ENCODE measurements at regions of chr7 and their contacts with region 1.

Region 1: DNA sequence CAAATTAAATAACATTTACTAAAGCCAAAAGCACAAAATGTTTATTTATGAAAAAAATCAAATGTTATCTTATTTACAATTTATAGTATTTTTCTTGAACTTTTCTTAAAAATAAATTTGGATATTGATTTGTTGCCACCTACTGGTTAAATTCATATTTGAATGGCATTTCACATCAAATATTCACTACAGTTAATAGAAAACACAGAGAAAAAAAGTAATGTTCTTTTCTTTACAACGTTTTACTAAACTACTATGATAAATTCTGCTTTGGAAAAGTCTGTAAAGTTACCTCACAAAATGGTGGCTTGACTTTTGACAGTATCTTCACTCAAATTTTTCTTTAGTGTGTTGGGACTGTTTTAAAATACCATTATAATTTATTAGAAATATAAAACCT is 52.7 kb downstream of the SRPK2 start:
- DNase-seq: peak in 1 of 9 experiments; percentile 34
- ATAC-seq: no peak
- H3K4me3 ChIP-seq: no peak overlapping the region
- H3K4me3 Mint-ChIP-seq: no peak overlapping the region
- H3K27ac ChIP-seq: no peak overlapping the region
- H3K27ac Mint-ChIP-seq: no peak overlapping the region
- H3K4me1 ChIP-seq: no peaks in the 10 kb centered on the region
- H3K4me1 Mint-ChIP-seq: peaks cover 26% of the 10 kb centered on the region
- H3K27me3 ChIP-seq: no peaks in the 10 kb centered on the region
- H3K27me3 Mint-ChIP-seq: no peaks in the 10 kb centered on the region
- CTCF ChIP-seq: peak; percentile 84

Region 2: DNA sequence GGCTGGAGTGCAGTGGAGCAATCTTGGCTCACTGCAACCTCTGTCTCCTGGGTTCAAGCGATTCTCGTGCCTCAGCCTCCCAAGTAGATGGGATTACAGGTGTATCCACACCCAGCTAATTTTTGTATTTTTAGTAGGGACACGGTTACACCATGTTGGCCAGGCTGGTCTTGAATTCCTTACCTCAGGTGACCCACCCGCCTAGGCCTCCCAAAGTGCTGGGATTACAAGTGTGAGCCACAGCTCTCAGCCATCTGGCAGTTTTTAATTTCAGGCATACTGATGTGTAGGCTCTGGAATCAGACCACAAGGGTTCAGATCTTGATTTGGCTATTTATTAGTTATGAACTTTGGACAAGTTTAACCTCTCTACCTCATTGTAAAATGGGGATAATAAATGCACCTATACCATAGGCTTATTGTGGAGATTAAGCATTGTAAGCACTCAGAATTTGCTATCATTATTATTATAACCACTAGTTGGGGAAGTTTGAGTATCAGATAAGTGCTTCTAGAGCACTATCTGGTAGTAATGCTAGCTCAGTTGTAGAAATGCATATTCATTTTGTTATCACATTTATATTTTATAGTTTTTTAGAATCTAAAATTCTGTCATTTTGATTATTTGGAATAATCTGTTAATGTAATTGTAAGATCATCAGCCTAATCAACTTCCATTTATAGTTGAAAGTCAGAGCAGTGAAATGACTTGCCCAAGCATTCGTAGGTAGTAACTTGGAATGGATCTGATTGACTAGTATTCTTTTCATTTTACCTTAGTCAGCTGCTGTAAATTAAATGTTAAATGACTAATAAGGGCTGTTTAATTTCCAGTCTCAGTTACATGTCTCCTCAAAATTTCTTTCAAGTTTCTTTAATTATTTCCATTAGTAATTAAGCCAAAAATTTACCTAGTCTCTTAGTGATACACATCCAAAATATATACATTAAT is 299.5 kb before region 1 on chr7:
- CTCF ChIA-PET with region 1: no interaction called
- POLR2A ChIA-PET with region 1: no interaction called
- intact Hi-C with region 1: no loop called
- DNase-seq: no peak
- ATAC-seq: no peak
- H3K4me3 ChIP-seq: no peak overlapping the region
- H3K4me3 Mint-ChIP-seq: no peak overlapping the region
- H3K27ac ChIP-seq: peak overlapping the region in 1 of 2 experiments; percentile 18
- H3K27ac Mint-ChIP-seq: peak overlapping the region; percentile 25
- H3K4me1 ChIP-seq: peaks cover 42% of the 10 kb centered on the region
- H3K4me1 Mint-ChIP-seq: peaks cover 66% of the 10 kb centered on the region
- H3K27me3 ChIP-seq: no peaks in the 10 kb centered on the region
- H3K27me3 Mint-ChIP-seq: no peaks in the 10 kb centered on the region
- CTCF ChIP-seq: no peak

Region 3: GRCh38 chr7:105118612-105119600 is 217.1 kb before region 1 on chr7:
- CTCF ChIA-PET with region 1: interaction called, 4 read pairs
- POLR2A ChIA-PET with region 1: no interaction called
- intact Hi-C with region 1: loop called in 1 of 2 experiments (anchors 10 kb)
- DNase-seq: peak in 4 of 9 experiments; percentile 13 to 33 (median 22)
- ATAC-seq: peak; percentile 62
- H3K4me3 ChIP-seq: no peak overlapping the region
- H3K4me3 Mint-ChIP-seq: peak overlapping the region; percentile 39
- H3K27ac ChIP-seq: peak overlapping the region in 1 of 2 experiments; percentile 12
- H3K27ac Mint-ChIP-seq: peak overlapping the region; percentile 85
- H3K4me1 ChIP-seq: peaks cover 23% of the 10 kb centered on the region
- H3K4me1 Mint-ChIP-seq: peaks cover 40% of the 10 kb centered on the region
- H3K27me3 ChIP-seq: no peaks in the 10 kb centered on the region
- H3K27me3 Mint-ChIP-seq: no peaks in the 10 kb centered on the region
- CTCF ChIP-seq: no peak

Region 4: DNA sequence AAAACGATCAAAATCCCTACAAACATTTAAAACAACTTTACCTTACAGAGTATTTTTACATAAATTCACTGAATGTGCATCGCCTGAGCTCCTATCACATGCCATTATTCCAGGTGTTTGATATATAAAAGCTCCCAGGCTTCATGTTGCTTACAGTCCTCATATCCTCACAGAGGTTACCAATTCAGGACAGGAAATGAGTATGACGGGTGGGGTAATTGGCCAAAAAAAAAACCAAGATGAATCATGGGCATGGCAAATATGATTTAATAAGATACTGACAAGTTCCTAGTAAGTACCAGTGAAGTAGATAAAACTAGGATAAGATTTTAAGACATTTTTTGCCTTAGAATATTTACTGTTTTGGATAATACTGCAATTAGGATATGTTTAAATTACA is 186.2 kb before region 1 on chr7:
- CTCF ChIA-PET with region 1: no interaction called
- POLR2A ChIA-PET with region 1: no interaction called
- intact Hi-C with region 1: loop called in 1 of 2 experiments (anchors 5 kb)
- DNase-seq: no peak
- ATAC-seq: no peak
- H3K4me3 ChIP-seq: no peak overlapping the region
- H3K4me3 Mint-ChIP-seq: no peak overlapping the region
- H3K27ac ChIP-seq: no peak overlapping the region
- H3K27ac Mint-ChIP-seq: no peak overlapping the region
- H3K4me1 ChIP-seq: no peaks in the 10 kb centered on the region
- H3K4me1 Mint-ChIP-seq: peaks cover 2% of the 10 kb centered on the region
- H3K27me3 ChIP-seq: no peaks in the 10 kb centered on the region
- H3K27me3 Mint-ChIP-seq: no peaks in the 10 kb centered on the region
- CTCF ChIP-seq: no peak

Region 5: DNA sequence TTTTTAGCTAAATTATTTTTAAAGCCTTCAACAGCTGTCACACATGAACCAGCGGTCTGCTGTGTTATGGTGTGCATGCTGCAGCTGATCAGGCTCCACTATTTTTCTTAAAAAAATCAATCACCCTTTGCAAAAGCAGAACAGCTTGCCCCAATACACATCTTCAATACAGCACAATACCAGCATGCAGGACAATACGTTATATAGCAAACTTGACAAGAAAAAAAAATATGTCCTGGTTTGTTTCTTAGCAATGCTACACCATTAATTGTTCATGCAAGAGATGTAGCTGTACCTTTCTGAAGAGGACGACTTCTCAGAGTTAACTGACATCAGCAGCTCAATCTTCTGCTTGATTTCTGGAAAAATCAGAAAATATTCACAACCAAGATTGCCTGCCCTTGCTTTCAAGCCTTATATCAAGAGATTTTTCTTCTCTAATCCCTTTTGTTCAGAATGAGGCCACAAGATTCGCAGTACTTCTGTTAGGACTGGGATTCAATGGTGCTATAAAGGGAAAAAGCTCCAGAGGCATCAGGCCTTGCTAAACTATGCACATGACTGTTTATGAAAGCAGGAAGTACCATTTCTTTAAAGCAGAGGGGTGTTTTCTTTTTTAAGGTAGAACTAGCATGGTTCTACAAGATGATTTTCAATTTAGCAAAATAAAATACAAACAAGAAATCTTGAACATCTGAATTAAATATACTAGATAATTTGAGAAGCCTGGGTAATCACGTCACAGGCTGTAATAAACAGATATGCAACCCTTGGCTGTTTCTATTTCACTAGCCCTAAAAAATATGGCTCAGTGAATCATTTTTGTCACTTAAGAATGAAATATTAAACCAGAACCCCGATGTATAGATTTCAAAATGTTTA is 67.3 kb before region 1 on chr7:
- CTCF ChIA-PET with region 1: interaction called, 3 read pairs
- POLR2A ChIA-PET with region 1: no interaction called
- intact Hi-C with region 1: loop called in 1 of 2 experiments (anchors 5 kb)
- DNase-seq: peak in 2 of 9 experiments; percentile 44 to 64
- ATAC-seq: peak; percentile 68
- H3K4me3 ChIP-seq: peak overlapping the region; percentile 44 to 52
- H3K4me3 Mint-ChIP-seq: peak overlapping the region; percentile 88
- H3K27ac ChIP-seq: peak overlapping the region; percentile 28 to 67
- H3K27ac Mint-ChIP-seq: peak overlapping the region; percentile 91
- H3K4me1 ChIP-seq: peaks cover 31% of the 10 kb centered on the region
- H3K4me1 Mint-ChIP-seq: peaks cover 70% of the 10 kb centered on the region
- H3K27me3 ChIP-seq: no peaks in the 10 kb centered on the region
- H3K27me3 Mint-ChIP-seq: no peaks in the 10 kb centered on the region
- CTCF ChIP-seq: no peak

Region 6: DNA sequence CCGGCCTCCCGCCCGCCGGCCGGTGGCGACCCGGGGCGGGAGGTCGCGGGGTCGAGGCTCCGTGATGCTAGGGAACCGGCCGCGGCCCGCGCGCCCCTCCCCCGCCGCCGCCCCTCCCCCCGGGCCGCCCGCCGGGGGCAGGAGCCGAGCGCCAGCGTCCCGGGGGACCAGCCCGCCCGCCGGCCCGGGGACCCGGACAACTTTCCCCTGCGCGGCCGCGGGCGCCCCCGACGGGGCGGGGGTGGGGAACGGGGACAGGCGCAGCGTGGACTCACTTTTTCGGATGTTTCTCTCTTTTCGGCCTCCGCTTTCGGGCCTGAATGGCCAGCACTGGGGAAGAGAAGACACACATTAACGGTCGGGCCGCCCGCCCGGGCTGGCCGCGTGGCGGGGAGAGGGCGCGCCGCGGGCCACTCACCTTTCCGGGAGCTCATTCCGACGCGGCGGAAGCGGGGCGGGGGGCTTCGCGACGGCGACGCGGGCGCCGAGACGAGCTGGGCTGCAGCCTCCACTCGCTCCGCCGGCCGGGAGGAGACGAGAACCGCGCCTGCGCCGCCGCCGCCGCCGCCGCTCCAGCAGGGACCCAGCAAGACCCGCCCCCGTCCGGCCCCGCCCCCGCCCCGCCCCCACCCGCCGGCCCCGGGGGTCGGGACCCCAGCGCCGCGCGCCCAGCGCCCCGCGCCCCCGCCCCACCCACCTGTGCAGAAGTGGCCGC is 52.5 kb after region 1 on chr7 and contains the start of gene SRPK2:
- CTCF ChIA-PET with region 1: no interaction called
- POLR2A ChIA-PET with region 1: interaction called, 3 read pairs
- intact Hi-C with region 1: loop called in 1 of 2 experiments (anchors 10 kb)
- DNase-seq: peak; percentile 39 to 86 (median 76)
- ATAC-seq: peak; percentile 80
- H3K4me3 ChIP-seq: peak within 1 kb of the TSS; percentile 65 to 85
- H3K4me3 Mint-ChIP-seq: peak within 1 kb of the TSS; percentile 95
- H3K27ac ChIP-seq: peak within 1 kb of the TSS; percentile 59
- H3K27ac Mint-ChIP-seq: peak within 1 kb of the TSS; percentile 95
- H3K4me1 ChIP-seq: peaks cover 14% of the 10 kb centered on the region
- H3K4me1 Mint-ChIP-seq: peaks cover 40% of the 10 kb centered on the region
- H3K27me3 ChIP-seq: no peaks in the 10 kb centered on the region
- H3K27me3 Mint-ChIP-seq: no peaks in the 10 kb centered on the region
- CTCF ChIP-seq: no peak
- total RNA-seq, gene SRPK2: 29.2 to 29.7 TPM

Measured in CD8-positive, alpha-beta T cell (primary cell).